ENCODE measurements at regions of chr3 and their contacts with region 1.

Region 1: GRCh38 chr3:27840807-27841594 is 118.9 kb upstream of the EOMES start:
- DNase-seq: no peak
- H3K4me3 ChIP-seq: no peak overlapping the region
- H3K27ac ChIP-seq: no peak overlapping the region
- H3K4me1 ChIP-seq: no peaks in the 10 kb centered on the region
- H3K27me3 ChIP-seq: no peaks in the 10 kb centered on the region
- CTCF ChIP-seq: no peak
- EP300 ChIP-seq: no peak
- POLR2A ChIP-seq: no peak

Region 2: DNA sequence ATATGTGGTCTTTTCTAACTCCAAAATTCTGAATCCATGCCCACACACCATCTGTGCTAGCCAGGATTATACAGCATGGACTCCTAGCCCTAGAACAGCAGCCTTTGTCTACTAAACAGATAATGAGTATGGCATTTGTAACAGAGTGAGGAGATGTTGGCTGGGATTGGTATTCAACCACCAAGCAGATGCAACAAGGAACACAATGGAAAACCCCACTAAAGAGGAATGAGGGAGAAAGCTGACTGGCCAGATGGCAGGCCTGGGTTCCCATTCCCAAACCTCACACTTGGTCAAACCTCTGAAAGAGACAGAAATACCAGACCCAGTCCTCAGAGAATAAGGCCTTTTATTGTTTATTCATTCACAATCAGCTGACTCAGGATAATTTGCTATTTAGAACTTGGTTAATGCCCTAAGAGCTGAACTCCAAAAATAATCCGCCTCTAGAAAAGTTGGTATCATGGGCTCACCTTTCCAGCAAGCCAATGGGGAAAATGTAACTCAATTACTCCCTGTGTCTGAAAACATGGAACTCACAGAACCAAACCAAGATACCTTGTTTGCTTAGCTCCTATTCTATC is 1072.8 kb before region 1 on chr3:
- in situ Hi-C with region 1: no loop called
- intact Hi-C with region 1: no loop called
- DNase-seq: no peak
- H3K4me3 ChIP-seq: no peak overlapping the region
- H3K27ac ChIP-seq: no peak overlapping the region
- H3K4me1 ChIP-seq: no peaks in the 10 kb centered on the region
- H3K27me3 ChIP-seq: no peaks in the 10 kb centered on the region
- CTCF ChIP-seq: no peak
- EP300 ChIP-seq: no peak
- POLR2A ChIP-seq: no peak

Region 3: DNA sequence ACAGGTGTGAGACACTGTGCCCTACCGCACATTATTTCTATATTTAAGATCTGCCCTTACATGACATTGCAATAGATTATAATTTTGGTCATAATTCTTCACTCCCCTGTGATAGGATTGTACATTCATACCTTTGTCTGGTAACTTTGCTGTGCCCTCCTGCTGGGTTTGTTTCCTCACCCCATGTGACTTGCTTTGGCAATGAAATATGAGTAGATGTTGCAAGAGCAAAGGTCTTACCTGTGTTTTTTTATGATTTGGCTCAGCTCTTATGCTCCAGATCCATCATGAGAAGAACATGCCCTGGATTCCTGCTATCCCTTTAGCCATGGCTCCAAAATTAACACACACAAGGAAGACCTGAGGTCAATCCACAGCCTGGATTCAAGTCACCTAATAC is 18.8 kb after region 1 on chr3:
- in situ Hi-C with region 1: no loop called
- intact Hi-C with region 1: loop called (anchors 1 kb)
- DNase-seq: no peak
- H3K4me3 ChIP-seq: no peak overlapping the region
- H3K27ac ChIP-seq: no peak overlapping the region
- H3K4me1 ChIP-seq: no peaks in the 10 kb centered on the region
- H3K27me3 ChIP-seq: no peaks in the 10 kb centered on the region
- CTCF ChIP-seq: no peak
- EP300 ChIP-seq: no peak
- POLR2A ChIP-seq: no peak